Right cardiac atrium (tissue), 5 donors: ENCODE measurements at regions of chr11 and their contacts with region 1.

Region 1: DNA sequence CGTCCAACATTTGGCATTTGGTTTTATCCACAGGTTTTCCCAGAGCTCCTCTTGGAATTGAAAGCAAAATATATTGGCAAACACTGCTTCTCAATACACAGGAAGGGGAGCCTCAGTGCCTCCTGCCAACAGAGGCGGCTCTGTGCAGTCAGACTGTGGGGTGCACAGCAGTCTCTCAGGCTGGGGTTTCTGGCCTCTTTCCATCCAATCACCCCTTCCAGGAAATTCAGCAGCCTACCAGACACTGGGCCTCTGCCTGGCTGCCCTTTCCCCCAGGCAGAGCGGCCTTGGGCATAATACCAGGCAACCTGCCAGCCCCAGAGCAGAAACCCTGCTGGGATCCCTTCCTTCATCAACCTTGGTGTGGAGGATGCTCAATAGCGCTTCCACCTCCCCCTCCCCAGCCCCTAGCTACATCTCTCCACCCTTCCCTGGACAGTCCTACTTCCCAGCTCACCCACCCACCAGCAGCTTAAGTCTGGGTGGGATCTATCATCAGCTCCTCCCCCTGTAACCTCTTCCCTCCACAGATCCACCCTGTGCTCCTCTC is 17.8 kb upstream of the RAPSN start:
- DNase-seq: peak; percentile 42 to 75 (median 69)
- ATAC-seq: peak; percentile 68 to 75
- H3K4me3 ChIP-seq: no peak overlapping the region
- H3K27ac ChIP-seq: peak overlapping the region; percentile 46
- H3K4me1 ChIP-seq: peaks cover 8% of the 10 kb centered on the region
- H3K27me3 ChIP-seq: no peaks in the 10 kb centered on the region

Region 2: DNA sequence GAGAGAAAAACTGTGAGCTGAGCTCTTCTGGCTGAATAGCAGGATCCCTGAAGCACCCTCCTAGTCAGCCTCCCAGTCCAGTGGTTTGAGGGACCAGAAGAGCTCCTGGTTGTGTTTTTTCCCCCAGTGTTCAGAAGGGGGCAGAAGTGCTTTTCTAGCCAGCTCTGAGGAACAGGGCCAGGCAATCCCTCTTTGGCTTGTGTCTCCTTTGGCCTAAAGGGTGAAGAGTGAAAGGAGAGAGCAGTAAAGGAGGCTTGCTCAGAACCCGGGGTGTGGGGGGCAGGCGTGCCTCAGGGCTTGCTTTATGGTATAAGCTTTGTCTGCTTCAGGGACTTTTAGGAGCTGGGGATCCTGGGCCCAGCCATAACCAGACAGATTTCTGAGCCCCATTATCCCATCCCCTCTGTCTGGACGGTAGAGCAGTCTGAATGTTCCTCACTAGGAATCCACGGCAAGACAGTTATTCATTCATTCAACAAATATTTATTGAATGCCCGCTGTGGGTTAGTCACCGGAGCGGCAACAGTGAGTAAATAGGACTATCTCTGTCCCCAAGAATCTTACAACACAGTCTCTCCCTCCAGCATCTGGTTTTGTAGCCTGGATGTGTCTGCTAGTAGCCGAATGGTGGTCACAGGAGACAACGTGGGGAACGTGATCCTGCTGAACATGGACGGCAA is 232.6 kb before region 1 on chr11:
- intact Hi-C with region 1: no loop called
- DNase-seq: peak in 2 of 3 donors; percentile 40 to 78
- ATAC-seq: peak; percentile 67 to 76
- H3K4me3 ChIP-seq: no peak overlapping the region
- H3K27ac ChIP-seq: no peak overlapping the region
- H3K4me1 ChIP-seq: no peaks in the 10 kb centered on the region
- H3K27me3 ChIP-seq: no peaks in the 10 kb centered on the region

Region 3: GRCh38 chr11:47495011-47495855 is 28.5 kb after region 1 on chr11:
- intact Hi-C with region 1: no loop called
- DNase-seq: no peak
- ATAC-seq: no peak
- H3K4me3 ChIP-seq: no peak overlapping the region
- H3K27ac ChIP-seq: no peak overlapping the region
- H3K4me1 ChIP-seq: no peaks in the 10 kb centered on the region
- H3K27me3 ChIP-seq: no peaks in the 10 kb centered on the region

Region 4: GRCh38 chr11:47552566-47553416 is 86.0 kb after region 1 on chr11 and contains the start of gene CELF1:
- intact Hi-C with region 1: loop called in 1 of 4 experiments (anchors 10 kb)
- DNase-seq: peak; percentile 92 to 96 (median 96)
- ATAC-seq: peak; percentile 99
- H3K4me3 ChIP-seq: peak within 1 kb of the TSS; percentile 91
- H3K27ac ChIP-seq: peak within 1 kb of the TSS; percentile 90
- H3K4me1 ChIP-seq: peaks cover 5% of the 10 kb centered on the region
- H3K27me3 ChIP-seq: no peaks in the 10 kb centered on the region
- total RNA-seq, gene CELF1: 54.8 to 79.8 (median 73.4) TPM

Region 5: GRCh38 chr11:47899801-47900200 is 433.0 kb after region 1 on chr11:
- intact Hi-C with region 1: no loop called
- DNase-seq: no peak
- ATAC-seq: no peak
- H3K4me3 ChIP-seq: no peak overlapping the region
- H3K27ac ChIP-seq: no peak overlapping the region
- H3K4me1 ChIP-seq: no peaks in the 10 kb centered on the region
- H3K27me3 ChIP-seq: no peaks in the 10 kb centered on the region